Cardiac septum (tissue), 1 donor: ENCODE measurements at regions of chr5 and their contacts with region 1.

Region 1: DNA sequence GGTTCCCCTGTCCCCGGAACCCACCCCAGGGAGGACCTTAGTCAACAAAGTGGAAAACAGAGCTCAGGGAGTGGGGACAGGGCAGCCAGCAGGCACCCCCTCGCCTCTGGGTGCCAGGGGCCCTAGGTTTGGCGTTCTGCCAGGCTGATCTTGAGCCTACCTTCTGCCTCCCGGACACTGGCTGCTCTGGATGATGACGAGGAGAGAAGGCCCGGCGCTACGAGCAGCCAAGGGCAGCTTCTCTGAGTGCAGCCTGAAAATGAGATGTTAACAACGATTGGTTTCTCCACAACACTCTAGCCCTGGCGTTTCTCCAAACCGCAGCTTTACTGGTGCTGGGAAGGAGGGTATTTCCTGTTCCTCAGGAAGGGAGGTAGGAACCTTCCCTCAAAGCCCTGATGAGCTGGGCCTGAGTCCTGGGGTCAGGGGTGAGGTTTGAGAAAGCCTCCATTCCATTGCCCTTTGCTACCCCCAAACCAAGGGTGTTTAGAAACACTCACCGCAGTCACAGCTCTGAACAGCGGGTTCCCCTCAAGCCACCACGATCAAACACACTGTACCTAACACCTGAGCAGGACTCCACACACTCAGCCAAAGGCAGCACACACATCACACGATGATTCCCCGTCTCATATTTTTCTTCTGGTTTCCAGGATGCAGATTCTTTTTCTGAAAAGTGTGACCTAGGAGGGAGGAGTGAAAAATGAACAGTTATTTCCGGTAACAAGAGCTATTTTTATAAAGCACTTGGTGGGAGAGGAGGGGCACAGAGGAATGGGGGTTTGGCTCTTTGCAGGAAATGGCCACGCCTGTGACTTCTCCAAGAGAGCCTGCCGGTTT is at the start of gene STING1:
- DNase-seq: peak; percentile 88
- total RNA-seq, gene STING1: 85.3 TPM

Region 2: GRCh38 chr5:139104577-139105276 is 377.5 kb before region 1 on chr5:
- intact Hi-C with region 1: no loop called
- DNase-seq: no peak

Region 3: GRCh38 chr5:139439013-139439903 is 43.0 kb before region 1 on chr5 and contains the start of gene DNAJC18:
- intact Hi-C with region 1: loop called (anchors 5 kb)
- DNase-seq: peak; percentile 97
- total RNA-seq, gene DNAJC18: 20.3 TPM